Activated CD8-positive, alpha-beta T cell treated with anti-CD3 and anti-CD28 coated beads for 36 hours (primary cell): ENCODE measurements at regions of chr3 and their contacts with region 1.

Region 1: DNA sequence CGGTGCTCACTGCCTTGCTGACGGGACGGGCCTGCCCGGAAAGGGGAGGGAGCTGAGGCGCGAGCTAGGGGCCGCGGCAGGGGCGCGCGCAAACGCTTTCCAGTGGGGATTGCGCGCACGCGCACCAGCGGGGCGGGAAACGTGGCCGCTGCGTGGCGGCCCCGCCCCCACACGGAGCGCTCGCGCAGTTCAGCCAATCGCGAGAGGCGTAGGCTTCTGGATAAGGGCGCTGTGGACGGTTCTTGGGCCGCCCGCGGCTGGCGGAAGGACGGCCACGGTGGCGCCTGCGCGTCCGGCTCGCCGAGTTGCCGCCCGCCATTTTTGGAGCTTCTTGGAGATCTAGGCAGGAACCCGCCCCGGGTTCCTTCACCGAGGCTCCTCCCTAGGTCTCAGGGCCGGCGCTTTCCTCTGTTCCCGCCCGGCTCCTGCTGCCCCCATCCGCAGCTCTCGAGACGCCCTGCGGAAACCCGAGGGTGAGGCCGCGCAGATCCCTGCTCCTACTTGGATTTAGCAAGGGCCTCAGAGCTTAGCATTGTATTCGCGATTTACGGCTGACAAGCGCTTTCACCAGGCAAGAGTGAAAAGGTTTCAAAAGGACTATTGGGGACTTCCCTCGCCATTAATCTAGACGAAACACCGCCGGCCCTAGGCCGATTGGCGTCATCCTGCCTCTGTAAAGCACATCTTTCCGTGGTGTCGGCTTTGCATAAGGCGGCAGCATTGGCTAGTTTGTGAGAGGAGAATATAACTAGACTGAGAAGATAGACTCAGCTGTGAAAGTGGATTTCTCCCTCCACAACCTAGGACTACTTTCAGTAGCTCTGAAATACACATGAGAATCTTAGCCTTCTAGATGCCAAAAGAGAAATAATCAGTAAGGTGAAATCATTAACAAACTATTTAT is 496 bp upstream of the STAG1 start:
- DNase-seq: peak; percentile 99
- ATAC-seq: peak; percentile 87
- H3K4me3 Mint-ChIP-seq: peak overlapping the region; percentile 82
- H3K27ac Mint-ChIP-seq: peak overlapping the region; percentile 97
- H3K4me1 Mint-ChIP-seq: peaks cover 33% of the 10 kb centered on the region
- H3K27me3 Mint-ChIP-seq: no peaks in the 10 kb centered on the region
- CTCF ChIP-seq: no peak

Region 2: DNA sequence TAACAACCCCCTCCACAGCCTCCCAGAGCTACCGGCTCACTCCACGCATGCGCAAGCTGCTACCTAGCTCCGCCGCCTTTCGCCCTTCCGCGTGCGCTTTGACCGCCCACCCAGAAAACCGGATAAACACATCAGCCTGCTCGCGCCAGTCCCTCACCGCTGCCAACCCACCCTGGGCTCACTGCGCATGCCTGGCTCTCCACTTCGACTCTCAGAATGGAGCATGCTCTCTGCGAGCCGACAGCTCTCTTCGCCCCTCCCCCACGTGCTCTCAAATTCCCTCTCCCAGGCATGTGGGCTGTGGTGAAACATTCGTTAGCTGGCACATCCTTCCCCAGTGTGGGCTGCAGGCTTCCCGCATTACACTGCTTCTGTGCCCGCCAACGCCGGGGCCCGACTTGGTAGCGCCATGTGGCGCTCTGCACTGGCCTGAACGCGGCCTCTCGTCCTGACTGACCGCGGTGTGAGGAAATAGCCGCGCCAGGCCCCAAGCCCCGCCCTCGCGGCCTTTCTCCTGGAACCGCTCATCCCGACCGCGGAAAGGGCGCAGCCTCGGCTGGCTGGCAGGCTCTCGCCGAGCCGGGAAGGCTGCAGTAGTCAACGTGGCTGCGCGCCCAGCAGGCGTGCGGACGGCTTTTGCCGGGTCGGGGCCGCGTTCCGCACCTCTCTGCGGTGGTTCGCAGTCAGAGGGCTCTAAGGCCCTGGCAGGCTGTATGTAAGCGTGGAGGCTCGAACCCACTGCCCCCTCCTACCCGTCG is 556.1 kb before region 1 on chr3:
- CTCF ChIA-PET with region 1: interaction called, 11 read pairs
- POLR2A ChIA-PET with region 1: interaction called, 33 read pairs
- intact Hi-C with region 1: loop called (anchors 5 kb)
- DNase-seq: peak; percentile 100
- ATAC-seq: peak; percentile 79
- H3K4me3 Mint-ChIP-seq: peak overlapping the region; percentile 98
- H3K27ac Mint-ChIP-seq: peak overlapping the region; percentile 98
- H3K4me1 Mint-ChIP-seq: peaks cover 22% of the 10 kb centered on the region
- H3K27me3 Mint-ChIP-seq: peaks cover 3% of the 10 kb centered on the region
- CTCF ChIP-seq: no peak

Region 3: GRCh38 chr3:136385457-136385856 is 367.2 kb before region 1 on chr3:
- CTCF ChIA-PET with region 1: interaction called, 30 read pairs
- POLR2A ChIA-PET with region 1: interaction called, 3 read pairs
- intact Hi-C with region 1: loop called (anchors 5 kb)
- DNase-seq: no peak
- ATAC-seq: peak; percentile 65
- H3K4me3 Mint-ChIP-seq: no peak overlapping the region
- H3K27ac Mint-ChIP-seq: no peak overlapping the region
- H3K4me1 Mint-ChIP-seq: peaks cover 3% of the 10 kb centered on the region
- H3K27me3 Mint-ChIP-seq: no peaks in the 10 kb centered on the region
- CTCF ChIP-seq: no peak

Region 4: DNA sequence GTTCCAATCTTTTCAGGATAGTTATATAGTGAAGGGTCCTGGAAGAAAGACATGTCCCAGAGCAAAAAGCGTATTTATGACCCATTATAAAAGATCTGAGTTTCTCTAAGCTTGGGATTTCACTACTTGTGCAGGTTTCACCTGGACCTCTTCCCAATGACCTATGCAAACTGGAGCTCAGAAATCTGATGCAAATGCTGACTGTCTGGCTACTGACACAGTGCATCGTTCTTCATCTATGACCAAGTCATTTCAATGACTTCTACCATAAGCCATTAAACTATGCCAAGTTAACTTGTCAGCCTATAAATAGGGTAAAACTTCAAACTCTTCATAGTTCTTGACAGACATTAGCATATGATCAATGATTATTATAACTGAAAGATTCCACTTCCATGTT is 11.6 kb before region 1 on chr3:
- CTCF ChIA-PET with region 1: interaction called, 11 read pairs
- POLR2A ChIA-PET with region 1: interaction called, 5 read pairs
- intact Hi-C with region 1: no loop called
- DNase-seq: no peak
- ATAC-seq: no peak
- H3K4me3 Mint-ChIP-seq: no peak overlapping the region
- H3K27ac Mint-ChIP-seq: no peak overlapping the region
- H3K4me1 Mint-ChIP-seq: peaks cover 39% of the 10 kb centered on the region
- H3K27me3 Mint-ChIP-seq: no peaks in the 10 kb centered on the region
- CTCF ChIP-seq: no peak

Region 5: DNA sequence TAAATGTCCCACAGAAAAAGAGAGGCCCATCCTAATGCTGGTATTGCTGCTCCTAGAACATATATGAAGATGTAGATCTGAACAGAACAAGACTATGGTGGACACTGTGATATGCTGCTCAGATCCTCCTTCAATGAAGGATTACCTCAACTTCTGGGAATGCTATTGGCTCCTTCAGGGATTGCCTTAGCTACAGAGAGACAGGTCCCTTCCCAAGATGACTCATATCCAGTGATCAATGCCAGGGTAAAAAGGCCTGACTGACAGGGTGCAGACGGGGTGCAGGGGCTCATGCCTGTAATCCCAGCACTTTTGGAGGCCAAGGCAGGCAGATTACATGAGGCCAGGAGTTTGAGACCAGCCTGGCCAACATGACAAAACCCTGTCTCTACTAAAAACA is 20.0 kb after region 1 on chr3:
- CTCF ChIA-PET with region 1: no interaction called
- POLR2A ChIA-PET with region 1: no interaction called
- intact Hi-C with region 1: no loop called
- DNase-seq: no peak
- ATAC-seq: no peak
- H3K4me3 Mint-ChIP-seq: no peak overlapping the region
- H3K27ac Mint-ChIP-seq: no peak overlapping the region
- H3K4me1 Mint-ChIP-seq: no peaks in the 10 kb centered on the region
- H3K27me3 Mint-ChIP-seq: no peaks in the 10 kb centered on the region
- CTCF ChIP-seq: no peak

Region 6: DNA sequence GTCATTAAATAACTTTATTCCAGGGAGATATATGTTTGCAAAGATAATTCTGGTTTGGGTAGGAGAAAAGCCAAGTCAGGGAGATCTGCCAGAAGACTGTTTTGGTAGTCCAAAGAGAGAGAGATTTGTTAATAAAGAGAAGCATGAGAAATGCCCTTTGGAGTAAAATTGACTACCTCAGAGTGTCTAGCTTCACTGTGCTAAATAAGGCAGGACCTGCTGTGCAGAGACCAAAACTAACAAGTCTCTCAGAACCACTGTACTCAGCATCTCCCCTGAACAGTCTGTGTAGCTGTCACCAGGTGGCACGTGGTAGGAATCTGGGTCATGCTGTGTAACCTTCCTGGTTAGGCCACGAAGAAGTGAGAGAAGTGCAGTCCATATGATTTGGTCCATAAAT is 34.7 kb after region 1 on chr3:
- CTCF ChIA-PET with region 1: no interaction called
- POLR2A ChIA-PET with region 1: no interaction called
- intact Hi-C with region 1: no loop called
- DNase-seq: peak; percentile 46
- ATAC-seq: peak; percentile 83
- H3K4me3 Mint-ChIP-seq: no peak overlapping the region
- H3K27ac Mint-ChIP-seq: peak overlapping the region; percentile 30
- H3K4me1 Mint-ChIP-seq: peaks cover 14% of the 10 kb centered on the region
- H3K27me3 Mint-ChIP-seq: no peaks in the 10 kb centered on the region
- CTCF ChIP-seq: no peak

Region 7: GRCh38 chr3:136835089-136835816 is 82.6 kb after region 1 on chr3:
- CTCF ChIA-PET with region 1: no interaction called
- POLR2A ChIA-PET with region 1: no interaction called
- intact Hi-C with region 1: no loop called
- DNase-seq: no peak
- ATAC-seq: no peak
- H3K4me3 Mint-ChIP-seq: no peak overlapping the region
- H3K27ac Mint-ChIP-seq: no peak overlapping the region
- H3K4me1 Mint-ChIP-seq: peaks cover 17% of the 10 kb centered on the region
- H3K27me3 Mint-ChIP-seq: peaks cover 8% of the 10 kb centered on the region
- CTCF ChIP-seq: no peak

Region 8: DNA sequence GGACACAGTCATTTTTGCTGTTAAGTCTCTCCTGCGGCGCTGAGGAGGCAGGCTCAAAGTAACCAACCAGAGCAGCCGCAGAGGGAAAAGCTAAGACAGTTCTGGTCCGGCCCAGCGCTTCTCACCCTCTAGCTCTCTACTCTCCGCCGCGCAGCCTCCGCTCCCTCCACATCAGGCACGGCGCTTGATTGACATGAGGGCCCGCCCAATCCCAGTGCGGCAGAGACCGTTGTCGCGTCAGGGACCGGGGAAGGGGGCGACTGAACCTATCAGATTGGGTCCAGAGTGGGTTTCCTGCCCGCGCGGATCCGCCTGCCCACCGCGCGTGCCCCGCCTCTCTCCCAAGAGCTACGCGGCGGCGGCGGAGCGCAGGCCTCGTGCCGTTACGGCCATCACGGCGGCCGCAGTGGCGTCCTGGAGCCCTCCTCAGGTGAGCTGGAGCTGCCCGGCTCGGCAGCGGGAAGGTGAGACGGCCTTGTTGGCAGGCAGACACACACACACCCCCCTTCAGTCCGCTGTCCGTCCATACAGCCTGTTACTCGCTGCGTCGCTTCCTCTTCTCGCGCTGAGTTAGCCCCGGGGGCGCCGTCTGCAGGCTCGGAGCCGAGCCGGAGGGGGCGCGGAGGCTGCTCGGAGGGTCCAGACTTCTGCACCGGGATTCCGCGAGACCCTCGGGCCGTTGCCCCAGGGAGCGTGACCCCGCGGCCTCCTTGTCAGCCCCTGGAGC is 109.4 kb after region 1 on chr3 and contains the start of gene NCK1:
- CTCF ChIA-PET with region 1: interaction called, 34 read pairs
- POLR2A ChIA-PET with region 1: interaction called, 37 read pairs
- intact Hi-C with region 1: loop called (anchors 2 kb)
- DNase-seq: peak; percentile 99
- ATAC-seq: peak; percentile 98
- H3K4me3 Mint-ChIP-seq: peak within 1 kb of the TSS; percentile 97
- H3K27ac Mint-ChIP-seq: peak within 1 kb of the TSS; percentile 92
- H3K4me1 Mint-ChIP-seq: peaks cover 42% of the 10 kb centered on the region
- H3K27me3 Mint-ChIP-seq: no peaks in the 10 kb centered on the region
- CTCF ChIP-seq: peak; percentile 13
- total RNA-seq, gene NCK1: 31.9 to 34.7 TPM